Posterior vena cava (tissue), 2 donors: ENCODE measurements at regions of chr10 and their contacts with region 1.

Region 1: GRCh38 chr10:73096449-73097304 is at the start of gene P4HA1:
- DNase-seq: peak; percentile 100
- total RNA-seq, gene P4HA1: 33.3 to 35.0 TPM

Region 2: DNA sequence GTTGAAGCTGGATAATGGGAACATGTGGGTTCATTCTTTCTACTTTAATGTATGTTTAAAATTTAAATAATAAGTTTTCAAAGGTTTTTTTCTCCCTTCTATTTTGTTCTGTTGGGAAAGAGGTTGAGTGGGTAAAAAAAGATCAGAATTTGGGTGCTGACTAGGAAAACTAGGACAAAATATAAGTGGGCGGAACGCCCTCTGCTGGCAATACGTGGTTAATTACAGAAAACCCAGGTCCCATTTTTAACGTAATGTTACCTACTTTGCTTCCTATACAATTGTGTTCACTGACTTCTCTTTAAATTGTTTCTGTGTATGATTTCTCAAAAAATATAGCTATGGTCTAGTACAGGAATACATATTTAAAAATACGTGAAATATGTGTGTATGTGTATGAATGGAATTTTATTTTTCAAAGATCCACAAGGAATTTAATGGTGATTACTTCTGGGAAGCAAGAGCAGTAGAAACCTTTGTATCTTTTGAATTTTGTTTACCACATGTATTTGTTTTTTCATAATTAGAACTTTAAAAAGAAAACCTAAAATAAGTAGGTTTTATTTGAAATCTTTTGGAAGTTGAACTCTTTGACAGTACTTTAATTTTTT is 62.5 kb after region 1 on chr10:
- intact Hi-C with region 1: loop called in 1 of 2 experiments (anchors 10 kb)
- DNase-seq: no peak